ENCODE measurements at regions of chr3 and their contacts with region 1.

Region 1: GRCh38 chr3:17645072-17645698 is 97.2 kb downstream of the TBC1D5 start:
- DNase-seq: peak; percentile 53
- ATAC-seq: no peak
- H3K4me3 ChIP-seq: no peak overlapping the region
- H3K4me3 Mint-ChIP-seq: no peak overlapping the region
- H3K27ac ChIP-seq: no peak overlapping the region
- H3K27ac Mint-ChIP-seq: no peak overlapping the region
- H3K4me1 ChIP-seq: no peaks in the 10 kb centered on the region
- H3K4me1 Mint-ChIP-seq: peaks cover 12% of the 10 kb centered on the region
- H3K27me3 ChIP-seq: no peaks in the 10 kb centered on the region
- H3K27me3 Mint-ChIP-seq: no peaks in the 10 kb centered on the region
- CTCF ChIP-seq: peak; percentile 68

Region 2: DNA sequence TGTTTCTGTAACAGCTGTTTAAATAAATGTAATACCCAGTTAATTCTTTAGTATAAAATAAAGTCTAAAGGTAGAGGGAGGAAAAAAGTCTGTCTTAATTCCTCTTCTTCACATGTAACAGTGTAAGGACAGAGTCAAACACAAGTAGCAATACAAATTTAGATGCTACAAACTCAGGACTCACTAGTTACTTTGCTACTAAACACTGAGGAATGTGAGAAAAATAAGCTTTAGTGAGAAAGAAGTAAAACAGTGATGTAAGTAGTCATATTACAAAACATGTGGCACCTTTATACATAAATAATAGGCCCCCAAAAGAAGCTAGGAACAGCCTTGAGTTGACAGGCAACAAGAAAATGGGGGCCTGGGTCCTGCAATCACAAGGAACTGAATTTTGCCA is 15.8 kb before region 1 on chr3:
- CTCF ChIA-PET with region 1: interaction called, 12 read pairs
- POLR2A ChIA-PET with region 1: no interaction called
- intact Hi-C with region 1: no loop called
- DNase-seq: no peak
- ATAC-seq: no peak
- H3K4me3 ChIP-seq: no peak overlapping the region
- H3K4me3 Mint-ChIP-seq: no peak overlapping the region
- H3K27ac ChIP-seq: no peak overlapping the region
- H3K27ac Mint-ChIP-seq: no peak overlapping the region
- H3K4me1 ChIP-seq: peaks cover 0 to 8% of the 10 kb centered on the region in 2 donors
- H3K4me1 Mint-ChIP-seq: peaks cover 48% of the 10 kb centered on the region
- H3K27me3 ChIP-seq: no peaks in the 10 kb centered on the region
- H3K27me3 Mint-ChIP-seq: no peaks in the 10 kb centered on the region
- CTCF ChIP-seq: no peak

Region 3: GRCh38 chr3:17655743-17656142 is 10.6 kb after region 1 on chr3:
- CTCF ChIA-PET with region 1: interaction called, 13 read pairs
- POLR2A ChIA-PET with region 1: no interaction called
- intact Hi-C with region 1: no loop called
- DNase-seq: no peak
- ATAC-seq: no peak
- H3K4me3 ChIP-seq: no peak overlapping the region
- H3K4me3 Mint-ChIP-seq: no peak overlapping the region
- H3K27ac ChIP-seq: no peak overlapping the region
- H3K27ac Mint-ChIP-seq: no peak overlapping the region
- H3K4me1 ChIP-seq: no peaks in the 10 kb centered on the region
- H3K4me1 Mint-ChIP-seq: peaks cover 32% of the 10 kb centered on the region
- H3K27me3 ChIP-seq: no peaks in the 10 kb centered on the region
- H3K27me3 Mint-ChIP-seq: no peaks in the 10 kb centered on the region
- CTCF ChIP-seq: no peak

Region 4: GRCh38 chr3:17742108-17742879 is 97.1 kb after region 1 on chr3 and contains the start of gene TBC1D5:
- CTCF ChIA-PET with region 1: interaction called, 9 read pairs
- POLR2A ChIA-PET with region 1: no interaction called
- intact Hi-C with region 1: loop called (anchors 10 kb)
- DNase-seq: peak; percentile 97
- ATAC-seq: peak; percentile 85
- H3K4me3 ChIP-seq: peak within 1 kb of the TSS; percentile 81 to 84 (median 83)
- H3K4me3 Mint-ChIP-seq: peak within 1 kb of the TSS; percentile 96
- H3K27ac ChIP-seq: peak within 1 kb of the TSS; percentile 89 to 93
- H3K27ac Mint-ChIP-seq: peak within 1 kb of the TSS; percentile 98
- H3K4me1 ChIP-seq: peaks cover 43 to 49% of the 10 kb centered on the region in 2 donors
- H3K4me1 Mint-ChIP-seq: peaks cover 65% of the 10 kb centered on the region
- H3K27me3 ChIP-seq: no peaks in the 10 kb centered on the region
- H3K27me3 Mint-ChIP-seq: no peaks in the 10 kb centered on the region
- CTCF ChIP-seq: no peak
- total RNA-seq, gene TBC1D5: 111 and 112 TPM in 2 replicates

Region 5: DNA sequence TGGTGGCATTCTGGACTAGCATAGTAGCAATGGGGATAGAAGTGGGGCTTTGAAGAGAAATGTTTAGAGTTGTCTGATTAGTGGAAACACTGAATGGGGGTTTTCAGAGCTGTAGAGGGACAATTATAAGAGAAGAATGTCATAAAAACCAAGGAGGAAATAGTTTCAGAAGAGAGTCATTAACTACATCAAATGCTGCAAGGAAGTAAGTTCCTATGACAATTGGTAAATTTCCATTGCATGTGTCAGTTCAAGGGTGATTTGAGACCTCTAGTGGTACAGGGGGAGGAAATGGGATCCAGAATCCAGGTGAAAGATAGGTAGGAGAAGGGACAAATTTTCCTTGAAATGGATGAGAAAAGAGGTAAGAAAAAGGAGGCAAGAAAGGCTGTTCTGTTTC is 165.6 kb after region 1 on chr3:
- CTCF ChIA-PET with region 1: interaction called, 7 read pairs
- POLR2A ChIA-PET with region 1: no interaction called
- intact Hi-C with region 1: loop called (anchors 1 kb)
- DNase-seq: no peak
- ATAC-seq: no peak
- H3K4me3 ChIP-seq: no peak overlapping the region
- H3K4me3 Mint-ChIP-seq: no peak overlapping the region
- H3K27ac ChIP-seq: no peak overlapping the region
- H3K27ac Mint-ChIP-seq: no peak overlapping the region
- H3K4me1 ChIP-seq: no peaks in the 10 kb centered on the region
- H3K4me1 Mint-ChIP-seq: no peaks in the 10 kb centered on the region
- H3K27me3 ChIP-seq: peaks cover 0 to 5% (median 0%) of the 10 kb centered on the region in 4 experiments
- H3K27me3 Mint-ChIP-seq: peaks cover 7% of the 10 kb centered on the region
- CTCF ChIP-seq: peak; percentile 8

Region 6: DNA sequence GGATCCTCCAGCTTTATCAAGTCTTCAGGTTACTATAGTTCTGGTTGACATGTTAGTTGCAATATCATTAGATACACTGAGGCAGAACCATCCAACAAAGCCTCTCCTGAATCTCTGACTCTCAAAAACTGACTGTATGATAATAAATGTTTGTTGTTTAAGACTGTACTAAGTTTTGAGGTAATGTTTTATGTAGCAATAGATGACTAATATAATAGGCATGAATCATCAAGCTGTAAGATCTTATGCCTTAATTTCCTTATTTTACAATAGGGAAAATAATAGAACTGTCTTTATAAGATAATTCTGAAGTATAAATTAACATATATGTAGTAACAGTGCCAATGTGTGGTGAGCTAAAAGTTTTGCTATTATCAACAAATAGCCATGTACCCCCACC is 186.2 kb after region 1 on chr3:
- CTCF ChIA-PET with region 1: interaction called, 23 read pairs
- POLR2A ChIA-PET with region 1: no interaction called
- intact Hi-C with region 1: no loop called
- DNase-seq: no peak
- ATAC-seq: no peak
- H3K4me3 ChIP-seq: no peak overlapping the region
- H3K4me3 Mint-ChIP-seq: no peak overlapping the region
- H3K27ac ChIP-seq: no peak overlapping the region
- H3K27ac Mint-ChIP-seq: no peak overlapping the region
- H3K4me1 ChIP-seq: no peaks in the 10 kb centered on the region
- H3K4me1 Mint-ChIP-seq: no peaks in the 10 kb centered on the region
- H3K27me3 ChIP-seq: no peaks in the 10 kb centered on the region
- H3K27me3 Mint-ChIP-seq: peaks cover 3% of the 10 kb centered on the region
- CTCF ChIP-seq: no peak

Measured in B cell (primary cell).